Caco-2 (cell line): ENCODE measurements at regions of chr16 and their contacts with region 1.

Region 1: GRCh38 chr16:74666425-74667254 is at the start of gene RFWD3:
- DNase-seq: peak; percentile 99 to 100
- H3K4me3 ChIP-seq: peak within 1 kb of the TSS; percentile 65
- H3K4me3 Mint-ChIP-seq: peak within 1 kb of the TSS; percentile 95
- H3K27ac Mint-ChIP-seq: peak within 1 kb of the TSS; percentile 98
- H3K4me1 ChIP-seq: peaks cover 8% of the 10 kb centered on the region
- H3K4me1 Mint-ChIP-seq: peaks cover 18% of the 10 kb centered on the region
- H3K27me3 ChIP-seq: no peaks in the 10 kb centered on the region
- H3K27me3 Mint-ChIP-seq: no peaks in the 10 kb centered on the region
- CTCF ChIP-seq: no peak
- total RNA-seq, gene RFWD3: 111 and 118 TPM in 2 replicates

Region 2: DNA sequence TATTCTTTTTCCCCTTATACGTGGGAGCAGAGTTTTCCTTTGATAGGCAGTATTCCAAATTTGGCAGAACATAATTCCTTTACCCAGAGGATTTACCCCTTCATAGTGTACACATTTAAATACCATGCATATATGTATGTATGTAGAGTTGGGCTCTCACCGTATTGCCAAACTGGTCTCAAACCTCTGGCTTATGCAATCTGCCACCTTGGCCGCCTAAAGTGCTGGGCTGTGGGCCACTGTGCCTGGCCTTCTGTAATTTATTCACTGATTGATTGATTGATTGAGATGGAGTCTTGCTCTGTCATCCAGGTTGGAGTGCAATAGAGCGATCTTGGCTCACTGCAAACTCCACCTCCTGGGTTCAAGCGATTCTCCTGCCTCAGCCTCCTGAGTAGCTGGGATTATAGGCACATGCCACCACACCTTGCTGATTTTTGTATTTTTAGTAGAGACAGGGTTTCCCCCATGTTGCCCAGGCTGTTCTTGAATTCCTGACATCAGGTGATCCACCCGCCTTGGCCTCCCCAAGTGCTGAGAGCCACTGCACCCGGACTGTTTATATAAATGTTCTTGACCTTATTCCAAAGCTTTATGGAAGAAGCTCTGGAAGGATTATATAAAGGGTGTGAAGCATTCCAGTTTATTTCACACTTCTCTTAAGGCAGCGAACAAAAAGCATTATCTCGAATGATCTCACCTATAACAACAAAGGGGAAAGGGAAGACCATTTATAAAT is 74.6 kb before region 1 on chr16:
- CTCF ChIA-PET with region 1: no interaction called
- POLR2A ChIA-PET with region 1: interaction called, 26 read pairs
- intact Hi-C with region 1: no loop called
- DNase-seq: no peak
- H3K4me3 ChIP-seq: no peak overlapping the region
- H3K4me3 Mint-ChIP-seq: no peak overlapping the region
- H3K27ac Mint-ChIP-seq: no peak overlapping the region
- H3K4me1 ChIP-seq: peaks cover 3% of the 10 kb centered on the region
- H3K4me1 Mint-ChIP-seq: peaks cover 4% of the 10 kb centered on the region
- H3K27me3 ChIP-seq: no peaks in the 10 kb centered on the region
- H3K27me3 Mint-ChIP-seq: no peaks in the 10 kb centered on the region
- CTCF ChIP-seq: no peak

Region 3: GRCh38 chr16:74679983-74680382 is 13.3 kb after region 1 on chr16:
- CTCF ChIA-PET with region 1: no interaction called
- POLR2A ChIA-PET with region 1: interaction called, 14 read pairs
- intact Hi-C with region 1: no loop called
- DNase-seq: no peak
- H3K4me3 ChIP-seq: no peak overlapping the region
- H3K4me3 Mint-ChIP-seq: no peak overlapping the region
- H3K27ac Mint-ChIP-seq: no peak overlapping the region
- H3K4me1 ChIP-seq: 0 out of 2 replicates have a peak, but pooled peaks cover 3% of the 10 kb centered on the region
- H3K4me1 Mint-ChIP-seq: peaks cover 7% of the 10 kb centered on the region
- H3K27me3 ChIP-seq: no peaks in the 10 kb centered on the region
- H3K27me3 Mint-ChIP-seq: no peaks in the 10 kb centered on the region
- CTCF ChIP-seq: no peak

Region 4: DNA sequence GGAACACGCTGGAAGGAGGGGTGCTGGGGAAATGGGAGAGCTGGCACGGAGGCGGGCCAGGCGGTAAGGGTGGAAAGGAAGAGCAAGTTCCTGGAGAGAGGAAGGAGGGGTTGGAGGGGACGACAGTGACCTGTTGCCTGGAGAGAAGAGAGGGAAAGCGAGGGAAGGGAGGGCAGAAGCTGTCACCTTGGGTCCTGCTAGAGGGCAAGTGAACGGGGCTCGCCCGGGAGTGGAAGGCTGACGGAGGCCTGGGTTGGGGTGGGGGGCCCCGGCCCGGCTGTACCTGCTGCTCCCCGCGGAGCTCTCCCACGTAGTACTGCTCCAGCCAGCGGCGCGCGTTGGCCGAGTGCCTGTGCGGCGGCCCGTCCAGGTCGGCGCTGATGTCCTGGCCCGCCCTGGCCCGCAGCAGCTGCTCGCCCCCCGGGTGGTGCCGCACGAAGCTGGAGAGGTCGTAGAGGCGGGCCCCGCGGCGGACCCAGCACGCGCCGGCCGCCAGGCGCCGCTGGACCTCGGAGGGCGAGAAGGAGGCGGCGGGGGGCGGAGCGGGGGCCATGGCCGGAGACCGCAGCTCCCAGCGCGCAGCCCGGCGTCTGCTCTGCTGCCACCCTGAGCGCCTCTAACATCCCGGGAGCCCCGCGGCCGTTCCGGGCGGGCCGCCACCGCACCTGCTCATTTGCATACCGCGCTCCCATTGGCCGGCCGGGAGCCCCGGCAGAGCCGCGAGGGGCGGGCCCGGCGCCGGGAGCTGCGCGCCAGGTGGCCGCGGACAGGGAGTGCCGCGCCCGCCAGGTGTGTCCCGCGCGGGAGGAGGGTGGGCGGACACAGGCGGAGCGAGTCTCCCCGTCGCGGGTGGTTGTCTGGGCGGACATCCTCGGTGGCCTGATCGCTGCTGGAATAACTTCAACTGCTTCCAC is 107.8 kb after region 1 on chr16 and contains the start of gene FA2H:
- CTCF ChIA-PET with region 1: interaction called, 3 read pairs
- POLR2A ChIA-PET with region 1: interaction called, 10 read pairs
- intact Hi-C with region 1: no loop called
- DNase-seq: peak; percentile 97 to 100
- H3K4me3 ChIP-seq: peak within 1 kb of the TSS; percentile 82
- H3K4me3 Mint-ChIP-seq: peak within 1 kb of the TSS; percentile 98
- H3K27ac Mint-ChIP-seq: peak within 1 kb of the TSS; percentile 84
- H3K4me1 ChIP-seq: peaks cover 7% of the 10 kb centered on the region; the same call in 1 of the 2 replicates
- H3K4me1 Mint-ChIP-seq: peaks cover 18% of the 10 kb centered on the region
- H3K27me3 ChIP-seq: no peaks in the 10 kb centered on the region
- H3K27me3 Mint-ChIP-seq: no peaks in the 10 kb centered on the region
- CTCF ChIP-seq: peak; percentile 38 to 65
- total RNA-seq, gene FA2H: 20.1 and 21.3 TPM in 2 replicates

Region 5: DNA sequence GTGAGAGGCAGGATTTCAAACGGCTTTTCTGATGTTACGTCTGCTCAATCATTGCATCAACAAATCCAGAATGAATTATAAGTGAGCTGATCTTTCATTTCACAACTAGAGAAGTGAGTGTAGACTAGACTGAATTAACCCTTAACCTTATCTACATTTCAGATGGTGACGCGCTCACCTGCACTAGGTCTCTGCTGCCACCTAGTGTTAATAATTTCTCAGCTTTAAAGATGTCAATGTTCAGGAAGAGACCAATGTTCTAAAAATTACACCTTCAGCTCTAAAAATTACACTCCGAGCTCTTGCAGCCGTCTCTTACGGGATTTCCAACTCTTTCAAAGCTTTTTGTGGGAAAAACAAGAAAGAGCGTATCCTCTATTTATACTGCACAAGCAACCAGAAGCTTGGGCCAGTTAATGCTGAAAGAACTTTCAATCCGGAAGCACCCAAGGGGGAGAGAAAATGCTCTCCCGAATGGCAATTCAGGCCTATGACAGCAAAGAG is 196.2 kb after region 1 on chr16:
- CTCF ChIA-PET with region 1: interaction called, 13 read pairs
- POLR2A ChIA-PET with region 1: interaction called, 6 read pairs
- intact Hi-C with region 1: no loop called
- DNase-seq: peak; percentile 49 to 78
- H3K4me3 ChIP-seq: no peak overlapping the region
- H3K4me3 Mint-ChIP-seq: no peak overlapping the region
- H3K27ac Mint-ChIP-seq: no peak overlapping the region
- H3K4me1 ChIP-seq: no peaks in the 10 kb centered on the region
- H3K4me1 Mint-ChIP-seq: peaks cover 5% of the 10 kb centered on the region
- H3K27me3 ChIP-seq: no peaks in the 10 kb centered on the region
- H3K27me3 Mint-ChIP-seq: no peaks in the 10 kb centered on the region
- CTCF ChIP-seq: peak; percentile 88 to 97

Region 6: DNA sequence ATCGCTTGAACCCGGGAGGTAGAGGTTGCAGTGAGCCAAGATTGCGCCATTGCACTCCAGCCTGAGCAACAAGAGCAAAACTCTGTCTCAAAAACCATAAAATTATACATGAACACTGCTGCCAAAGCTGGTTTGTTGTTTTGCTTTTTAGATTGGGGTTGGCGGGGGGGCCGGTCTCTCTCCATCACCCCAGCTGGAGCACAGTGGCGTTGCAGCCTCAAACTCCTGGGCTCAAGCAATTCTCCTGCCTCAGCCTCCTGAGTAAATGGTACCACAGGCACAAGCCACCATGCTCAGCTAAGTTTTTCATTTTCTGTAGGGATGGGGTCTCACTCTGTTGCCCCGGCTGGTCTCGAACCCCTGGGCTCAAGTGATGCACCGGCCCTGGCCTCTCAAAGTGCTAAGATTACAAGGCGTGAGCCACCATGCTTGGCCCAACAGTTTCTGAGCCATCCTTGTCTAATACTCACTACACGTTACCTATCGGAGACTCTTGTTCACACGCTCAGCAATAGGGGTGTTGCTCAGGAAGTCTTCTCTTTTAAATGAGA is 306.6 kb after region 1 on chr16:
- CTCF ChIA-PET with region 1: no interaction called
- POLR2A ChIA-PET with region 1: no interaction called
- intact Hi-C with region 1: no loop called
- DNase-seq: no peak
- H3K4me3 ChIP-seq: no peak overlapping the region
- H3K4me3 Mint-ChIP-seq: no peak overlapping the region
- H3K27ac Mint-ChIP-seq: no peak overlapping the region
- H3K4me1 ChIP-seq: no peaks in the 10 kb centered on the region
- H3K4me1 Mint-ChIP-seq: no peaks in the 10 kb centered on the region
- H3K27me3 ChIP-seq: no peaks in the 10 kb centered on the region
- H3K27me3 Mint-ChIP-seq: no peaks in the 10 kb centered on the region
- CTCF ChIP-seq: no peak